ENCODE measurements at regions of chr9 and their contacts with region 1.

Region 1: DNA sequence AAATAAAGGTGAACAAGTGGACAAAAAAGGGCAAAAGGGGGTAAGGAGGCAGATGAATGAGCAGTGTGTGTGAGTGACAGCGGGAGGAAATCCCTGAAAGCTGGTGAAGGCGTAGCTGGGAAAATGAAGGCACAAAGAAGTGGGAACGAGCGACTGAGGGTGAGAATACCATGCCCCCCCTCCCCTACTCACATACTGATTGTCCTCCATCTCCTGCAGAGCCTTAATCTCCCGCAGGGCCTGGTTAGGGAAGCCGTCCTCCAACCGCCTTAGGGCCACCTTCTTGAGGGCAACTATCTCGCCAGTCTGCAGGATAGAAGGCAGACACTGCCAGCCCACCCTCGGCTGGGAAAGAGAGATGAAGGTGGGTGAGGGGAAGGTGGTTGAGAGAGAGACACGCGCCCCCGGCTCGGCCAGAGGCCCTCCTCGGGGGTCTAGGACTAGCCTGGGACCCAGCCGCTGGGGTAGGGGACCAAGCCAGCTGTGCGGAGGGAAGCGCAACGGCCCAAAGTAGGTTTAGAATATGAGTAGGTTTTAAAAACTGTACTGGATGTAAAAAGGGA is 522 bp downstream of the CDK20 start:
- DNase-seq: no peak
- H3K4me3 ChIP-seq: peak overlapping the region; percentile 39 to 79 (median 78)
- H3K4me3 Mint-ChIP-seq: peak overlapping the region; percentile 89 to 98
- H3K27ac ChIP-seq: peak overlapping the region; percentile 86 to 94
- H3K27ac Mint-ChIP-seq: peak overlapping the region; percentile 94 to 99 (median 98)
- H3K4me1 ChIP-seq: peaks cover 17 to 18% of the 10 kb centered on the region in 2 donors
- H3K4me1 Mint-ChIP-seq: peaks cover 9% of the 10 kb centered on the region
- H3K27me3 ChIP-seq: no peaks in the 10 kb centered on the region
- H3K27me3 Mint-ChIP-seq: peaks cover 0 to 2% (median 0%) of the 10 kb centered on the region in 3 donors
- CTCF ChIP-seq: no peak

Region 2: DNA sequence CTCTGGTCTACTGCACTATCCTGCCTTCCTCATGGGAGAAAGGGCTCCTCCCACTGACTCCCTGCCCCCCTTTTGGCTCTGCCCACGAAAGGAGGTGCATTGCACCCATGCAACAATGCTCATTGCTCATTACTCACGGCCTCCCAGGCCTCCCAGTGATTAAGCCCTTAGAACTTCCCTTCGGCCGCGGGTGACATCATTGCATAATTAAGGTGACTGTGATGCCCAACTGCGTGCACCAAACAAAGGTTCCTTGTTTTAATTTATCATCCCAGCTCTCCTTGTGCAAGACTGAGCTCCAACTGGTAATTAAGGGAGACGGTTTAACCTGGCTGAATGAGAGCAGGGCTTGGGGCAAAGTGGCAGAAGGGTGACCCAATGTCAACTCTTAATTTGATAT is 1206.9 kb before region 1 on chr9:
- intact Hi-C with region 1: loop called (anchors 10 kb)
- DNase-seq: peak; percentile 94 to 99 (median 97)
- H3K4me3 ChIP-seq: peak overlapping the region in 1 of 3 experiments; percentile 54
- H3K4me3 Mint-ChIP-seq: peak overlapping the region in 1 of 2 donors; percentile 71
- H3K27ac ChIP-seq: peak overlapping the region; percentile 94 to 96
- H3K27ac Mint-ChIP-seq: peak overlapping the region in 1 of 7 donors; percentile 97
- H3K4me1 ChIP-seq: peaks cover 56 to 57% of the 10 kb centered on the region in 2 donors
- H3K4me1 Mint-ChIP-seq: peaks cover 1% of the 10 kb centered on the region
- H3K27me3 ChIP-seq: no peaks in the 10 kb centered on the region
- H3K27me3 Mint-ChIP-seq: peaks cover 0 to 10% (median 4%) of the 10 kb centered on the region in 3 donors
- CTCF ChIP-seq: no peak

Region 3: GRCh38 chr9:88025399-88026117 is 51.7 kb after region 1 on chr9:
- intact Hi-C with region 1: no loop called
- DNase-seq: no peak
- H3K4me3 ChIP-seq: no peak overlapping the region
- H3K4me3 Mint-ChIP-seq: no peak overlapping the region
- H3K27ac ChIP-seq: no peak overlapping the region
- H3K27ac Mint-ChIP-seq: no peak overlapping the region
- H3K4me1 ChIP-seq: no peaks in the 10 kb centered on the region
- H3K4me1 Mint-ChIP-seq: no peaks in the 10 kb centered on the region
- H3K27me3 ChIP-seq: no peaks in the 10 kb centered on the region
- H3K27me3 Mint-ChIP-seq: peaks cover 5 to 12% (median 12%) of the 10 kb centered on the region in 3 donors
- CTCF ChIP-seq: no peak

Region 4: GRCh38 chr9:88041447-88041846 is 67.6 kb after region 1 on chr9:
- intact Hi-C with region 1: no loop called
- DNase-seq: no peak
- H3K4me3 ChIP-seq: no peak overlapping the region
- H3K4me3 Mint-ChIP-seq: no peak overlapping the region
- H3K27ac ChIP-seq: no peak overlapping the region
- H3K27ac Mint-ChIP-seq: no peak overlapping the region
- H3K4me1 ChIP-seq: no peaks in the 10 kb centered on the region
- H3K4me1 Mint-ChIP-seq: no peaks in the 10 kb centered on the region
- H3K27me3 ChIP-seq: no peaks in the 10 kb centered on the region
- H3K27me3 Mint-ChIP-seq: peaks cover 0 to 5% (median 2%) of the 10 kb centered on the region in 3 donors
- CTCF ChIP-seq: no peak

Region 5: GRCh38 chr9:88388172-88388885 is 414.5 kb after region 1 on chr9 and contains the start of gene SPIN1:
- intact Hi-C with region 1: loop called in 1 of 2 experiments (anchors 10 kb)
- DNase-seq: peak; percentile 51 to 67 (median 62)
- H3K4me3 ChIP-seq: peak within 1 kb of the TSS; percentile 84 to 89 (median 86)
- H3K4me3 Mint-ChIP-seq: peak within 1 kb of the TSS; percentile 96
- H3K27ac ChIP-seq: peak within 1 kb of the TSS; percentile 22 to 75
- H3K27ac Mint-ChIP-seq: peak within 1 kb of the TSS; percentile 84 to 94 (median 86)
- H3K4me1 ChIP-seq: peaks cover 32 to 37% of the 10 kb centered on the region in 2 donors
- H3K4me1 Mint-ChIP-seq: peaks cover 44% of the 10 kb centered on the region
- H3K27me3 ChIP-seq: no peaks in the 10 kb centered on the region
- H3K27me3 Mint-ChIP-seq: peaks cover 0 to 2% (median 1%) of the 10 kb centered on the region in 3 donors
- CTCF ChIP-seq: peak; percentile 57
- polyA plus RNA-seq, gene SPIN1: 11.0 to 14.0 (median 11.3) TPM

Measured in CD14-positive monocyte (primary cell).